ENCODE measurements at regions of chr19 and their contacts with region 1.

Region 1: DNA sequence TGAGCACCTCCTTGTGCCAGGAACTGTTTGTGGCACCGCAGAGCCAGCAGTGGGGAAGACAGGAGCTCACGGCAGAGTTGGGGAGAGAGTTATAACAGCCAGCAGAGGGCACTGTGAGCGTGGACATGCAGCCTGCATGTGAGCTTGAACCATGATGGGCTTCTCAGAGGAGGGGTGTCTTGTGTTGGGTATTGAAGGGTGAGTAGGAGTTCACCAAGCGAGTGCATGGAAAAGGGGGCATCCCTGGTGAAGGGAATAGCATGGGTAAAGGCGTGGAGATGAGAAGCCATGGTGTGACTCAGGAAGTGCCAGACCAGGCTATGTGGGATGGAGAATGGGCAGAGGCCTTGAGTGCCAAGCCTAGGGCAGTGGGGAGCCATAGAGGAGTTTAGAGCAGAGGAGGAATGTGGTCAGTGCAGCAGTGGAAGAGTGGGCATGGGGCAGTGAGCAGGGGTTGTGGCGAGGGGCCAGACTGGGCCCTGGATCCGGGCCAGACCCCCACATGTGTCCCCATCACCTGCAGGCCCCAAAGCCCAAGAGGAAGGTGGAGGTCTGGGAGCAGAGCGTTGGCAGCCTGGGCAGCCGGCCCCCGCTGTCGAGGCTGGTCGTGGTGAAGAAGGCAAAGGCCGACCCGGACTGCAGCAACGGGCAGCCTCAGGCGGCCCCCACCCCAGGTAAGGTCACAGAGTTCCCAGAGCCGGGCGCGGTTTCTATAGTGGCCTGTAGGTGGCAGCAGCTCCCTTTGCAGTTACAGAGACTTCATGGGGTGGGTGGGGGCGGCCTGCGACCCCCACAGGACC is 11.8 kb upstream of the SHD start:
- DNase-seq: peak; percentile 53 to 75
- ATAC-seq: peak; percentile 49 to 82 (median 74)
- H3K4me3 ChIP-seq: no peak overlapping the region
- H3K27ac ChIP-seq: no peak overlapping the region
- H3K4me1 ChIP-seq: no peaks in the 10 kb centered on the region
- H3K27me3 ChIP-seq: no peaks in the 10 kb centered on the region
- CTCF ChIP-seq: peak; percentile 77

Region 2: DNA sequence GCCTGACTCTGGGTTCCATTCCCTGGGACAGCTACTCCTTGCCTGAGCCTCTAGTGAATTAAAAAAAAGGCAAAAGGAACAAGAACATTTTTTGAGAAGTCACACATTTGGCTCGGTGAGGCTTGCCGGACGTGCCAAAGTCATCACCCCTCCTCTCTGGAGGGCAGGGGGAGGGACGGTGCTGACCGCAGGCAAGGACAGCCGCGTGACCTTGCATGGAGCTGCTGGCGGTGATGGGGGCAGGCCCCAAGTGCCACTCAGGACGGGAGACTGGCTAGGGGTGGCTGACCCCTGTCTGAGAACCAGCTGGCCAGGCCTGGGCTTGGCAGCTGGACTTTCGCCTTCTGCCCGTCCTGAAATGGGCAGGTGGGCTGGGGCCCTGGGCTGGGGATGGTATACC is 169.8 kb before region 1 on chr19:
- intact Hi-C with region 1: no loop called
- DNase-seq: peak; percentile 67 to 76
- ATAC-seq: peak; percentile 26 to 48 (median 42)
- H3K4me3 ChIP-seq: no peak overlapping the region
- H3K27ac ChIP-seq: peak overlapping the region; percentile 65
- H3K4me1 ChIP-seq: peaks cover 20% of the 10 kb centered on the region
- H3K27me3 ChIP-seq: no peaks in the 10 kb centered on the region
- CTCF ChIP-seq: no peak

Region 3: DNA sequence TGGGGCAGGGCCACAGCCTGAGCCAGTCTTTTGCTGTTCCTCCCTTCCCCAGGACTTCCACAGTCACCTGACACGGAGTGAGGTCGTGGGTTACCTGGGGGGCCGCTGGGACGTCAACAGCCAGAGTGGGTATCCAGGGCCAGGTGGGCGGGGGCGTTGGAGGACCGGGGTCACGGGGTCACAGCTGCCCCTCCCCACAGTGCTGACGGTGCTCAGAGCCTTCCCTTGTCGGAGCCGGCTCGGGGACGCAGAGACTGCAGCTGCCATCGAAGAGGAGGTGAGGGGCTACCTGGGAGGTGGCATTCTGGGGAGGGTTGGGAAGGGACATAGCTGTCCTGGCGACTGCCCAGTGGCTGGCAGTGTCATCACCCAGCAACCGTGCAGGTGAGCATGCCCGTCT is 87.6 kb after region 1 on chr19:
- intact Hi-C with region 1: loop called (anchors 2 kb)
- DNase-seq: no peak
- ATAC-seq: no peak
- H3K4me3 ChIP-seq: no peak overlapping the region
- H3K27ac ChIP-seq: no peak overlapping the region
- H3K4me1 ChIP-seq: no peaks in the 10 kb centered on the region
- H3K27me3 ChIP-seq: no peaks in the 10 kb centered on the region
- CTCF ChIP-seq: no peak

Region 4: GRCh38 chr19:4524808-4525562 is 257.7 kb after region 1 on chr19:
- intact Hi-C with region 1: loop called in 1 of 2 experiments (anchors 10 kb)
- DNase-seq: peak; percentile 69 to 83
- ATAC-seq: peak; percentile 51 to 66 (median 64)
- H3K4me3 ChIP-seq: no peak overlapping the region
- H3K27ac ChIP-seq: no peak overlapping the region
- H3K4me1 ChIP-seq: no peaks in the 10 kb centered on the region
- H3K27me3 ChIP-seq: no peaks in the 10 kb centered on the region
- CTCF ChIP-seq: peak; percentile 58